ENCODE measurements at regions of chr1 and their contacts with region 1.

Region 1: DNA sequence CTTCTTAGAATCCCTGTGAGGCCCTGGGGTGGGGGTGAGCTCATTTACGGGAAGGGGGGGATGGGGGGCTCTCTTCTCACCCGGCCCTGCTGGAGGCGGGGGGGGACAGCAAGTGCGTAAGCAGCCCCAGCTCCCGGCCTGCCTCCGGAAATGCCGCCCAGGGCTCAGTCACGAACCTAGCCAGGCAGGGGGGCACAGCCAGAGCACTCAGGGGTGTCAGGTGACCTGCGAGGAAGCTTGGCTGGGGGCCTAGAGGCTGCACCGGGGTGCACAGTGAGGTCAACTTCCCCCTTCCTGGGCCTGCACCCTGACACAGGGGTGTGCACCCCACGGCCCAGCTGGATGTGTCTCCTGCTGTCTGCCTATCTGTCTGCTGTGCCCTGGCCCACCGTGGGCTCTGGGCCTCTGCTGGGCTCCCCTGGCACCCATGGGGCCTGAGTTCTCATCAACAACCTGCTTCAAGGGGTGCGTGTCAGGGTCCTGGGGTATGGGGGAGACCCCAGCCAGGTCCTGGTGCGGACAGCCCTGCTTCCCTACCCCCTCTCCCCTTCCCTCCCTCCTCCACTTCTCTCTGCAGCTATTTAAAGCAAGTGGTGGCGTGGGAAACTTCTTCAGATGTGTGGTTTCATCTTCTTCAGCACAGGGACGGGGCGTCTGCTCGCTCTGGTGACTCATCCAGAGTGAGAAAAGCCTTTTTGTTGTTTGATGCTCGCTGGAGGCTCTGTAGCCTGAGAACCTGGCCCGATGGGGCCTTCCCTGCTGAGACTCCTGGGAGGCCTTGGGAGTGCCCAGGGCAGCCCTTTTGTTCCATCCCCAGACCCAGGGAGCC is 92.5 kb upstream of the RUNX3 start:
- DNase-seq: peak; percentile 90 to 99 (median 94)
- H3K4me3 ChIP-seq: peak overlapping the region; percentile 14 to 20
- H3K4me3 Mint-ChIP-seq: peak overlapping the region; percentile 35 to 89 (median 70)
- H3K27ac ChIP-seq: peak overlapping the region; percentile 99
- H3K27ac Mint-ChIP-seq: peak overlapping the region; percentile 95 to 99 (median 97)
- H3K4me1 ChIP-seq: peaks cover 74% of the 10 kb centered on the region
- H3K4me1 Mint-ChIP-seq: peaks cover 27 to 76% (median 49%) of the 10 kb centered on the region in 4 donors
- H3K27me3 ChIP-seq: no peaks in the 10 kb centered on the region
- H3K27me3 Mint-ChIP-seq: no peaks in the 10 kb centered on the region

Region 2: DNA sequence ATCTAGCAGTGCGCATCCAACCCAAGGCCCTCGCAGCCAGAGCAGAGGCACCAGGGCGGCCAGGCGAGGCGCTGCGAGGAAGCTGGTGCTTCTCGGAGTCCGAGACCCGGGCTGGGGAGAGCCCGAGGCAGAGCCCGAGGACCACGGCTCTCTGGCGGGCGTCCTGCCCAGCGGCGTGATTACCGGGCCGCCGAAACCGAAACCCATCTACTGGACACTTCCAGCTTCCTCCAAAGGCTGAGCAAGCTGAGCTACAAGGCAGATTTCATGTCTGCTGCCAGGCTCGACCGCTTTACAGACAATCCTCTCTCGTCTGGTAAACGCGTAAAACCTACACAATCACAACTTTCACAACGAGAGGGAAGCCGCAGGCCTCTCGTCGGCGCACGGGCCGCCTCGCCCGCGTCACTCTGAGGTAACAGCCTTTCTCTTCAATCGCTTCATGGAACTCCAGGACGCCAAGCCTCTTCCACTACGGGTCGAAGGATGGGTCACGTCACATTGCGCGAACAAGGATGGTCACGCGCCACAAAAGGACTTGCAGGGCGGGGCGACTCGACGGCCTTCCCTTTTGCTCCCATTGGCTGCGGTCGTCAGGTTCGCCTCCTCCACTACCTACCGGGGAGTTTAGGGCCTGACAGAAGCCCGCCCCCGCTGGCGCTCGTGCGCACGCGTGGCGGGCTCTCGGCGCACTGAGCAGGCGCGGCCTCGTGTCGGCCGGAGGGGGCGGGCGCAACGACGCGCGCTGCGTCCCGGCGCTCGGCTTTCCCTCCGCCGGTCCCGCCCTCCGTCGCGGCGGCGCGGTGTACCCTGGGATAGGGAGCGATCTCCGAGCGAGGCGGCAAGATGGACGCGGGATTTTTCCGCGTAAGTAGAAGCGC is 379.9 kb before region 1 on chr1 and contains the start of gene SRRM1:
- CTCF ChIA-PET with region 1: no interaction called
- POLR2A ChIA-PET with region 1: no interaction called
- intact Hi-C with region 1: loop called (anchors 1 kb)
- DNase-seq: peak; percentile 98 to 100 (median 100)
- H3K4me3 ChIP-seq: peak within 1 kb of the TSS; percentile 47 to 98
- H3K4me3 Mint-ChIP-seq: peak within 1 kb of the TSS; percentile 94 to 98 (median 96)
- H3K27ac ChIP-seq: peak within 1 kb of the TSS; percentile 99
- H3K27ac Mint-ChIP-seq: peak within 1 kb of the TSS; percentile 97 to 100 (median 100)
- H3K4me1 ChIP-seq: peaks cover 32% of the 10 kb centered on the region
- H3K4me1 Mint-ChIP-seq: peaks cover 15 to 61% (median 42%) of the 10 kb centered on the region in 4 donors
- H3K27me3 ChIP-seq: no peaks in the 10 kb centered on the region
- H3K27me3 Mint-ChIP-seq: no peaks in the 10 kb centered on the region
- total RNA-seq, gene SRRM1: 209 to 230 TPM

Region 3: GRCh38 chr1:24955161-24955560 is 67.4 kb before region 1 on chr1:
- CTCF ChIA-PET with region 1: interaction called, 4 read pairs
- POLR2A ChIA-PET with region 1: interaction called, 5 read pairs
- intact Hi-C with region 1: loop called (anchors 1 kb)
- DNase-seq: peak; percentile 33 to 89 (median 52)
- H3K4me3 ChIP-seq: no peak overlapping the region
- H3K4me3 Mint-ChIP-seq: peak overlapping the region in 6 of 8 donors; percentile 47 to 79 (median 70)
- H3K27ac ChIP-seq: peak overlapping the region; percentile 15
- H3K27ac Mint-ChIP-seq: peak overlapping the region; percentile 83 to 94 (median 93)
- H3K4me1 ChIP-seq: peaks cover 58% of the 10 kb centered on the region
- H3K4me1 Mint-ChIP-seq: peaks cover 28 to 71% (median 56%) of the 10 kb centered on the region in 4 donors
- H3K27me3 ChIP-seq: no peaks in the 10 kb centered on the region
- H3K27me3 Mint-ChIP-seq: no peaks in the 10 kb centered on the region

Region 4: DNA sequence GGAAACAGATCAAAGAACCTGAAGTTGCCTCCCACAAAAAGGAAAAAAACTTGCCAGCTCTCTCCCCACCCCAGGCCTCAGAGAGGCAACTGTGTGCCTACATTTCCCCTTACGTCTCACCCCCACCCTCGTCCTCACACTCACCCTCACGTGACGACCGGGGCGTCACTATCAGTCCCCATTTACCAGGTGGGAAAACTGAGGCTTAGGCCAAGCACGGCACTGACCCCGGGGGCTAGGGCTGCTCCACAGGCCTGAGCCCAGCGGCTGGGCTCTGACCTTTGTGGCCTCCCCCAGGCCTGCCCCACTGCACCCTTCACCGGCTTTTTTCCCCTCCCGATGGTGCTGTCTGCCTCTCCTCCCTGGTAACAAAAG is 41.0 kb before region 1 on chr1:
- CTCF ChIA-PET with region 1: no interaction called
- POLR2A ChIA-PET with region 1: interaction called, 21 read pairs
- intact Hi-C with region 1: no loop called
- DNase-seq: no peak
- H3K4me3 ChIP-seq: no peak overlapping the region
- H3K4me3 Mint-ChIP-seq: peak overlapping the region in 7 of 8 donors; percentile 15 to 67 (median 52)
- H3K27ac ChIP-seq: no peak overlapping the region
- H3K27ac Mint-ChIP-seq: peak overlapping the region in 5 of 7 donors; percentile 44 to 93 (median 83)
- H3K4me1 ChIP-seq: peaks cover 72% of the 10 kb centered on the region
- H3K4me1 Mint-ChIP-seq: peaks cover 49 to 82% (median 65%) of the 10 kb centered on the region in 4 donors
- H3K27me3 ChIP-seq: no peaks in the 10 kb centered on the region
- H3K27me3 Mint-ChIP-seq: no peaks in the 10 kb centered on the region

Region 5: GRCh38 chr1:24996983-24997893 is 25.3 kb before region 1 on chr1:
- CTCF ChIA-PET with region 1: interaction called, 11 read pairs
- POLR2A ChIA-PET with region 1: interaction called, 88 read pairs
- intact Hi-C with region 1: loop called (anchors 2 kb)
- DNase-seq: no peak
- H3K4me3 ChIP-seq: no peak overlapping the region
- H3K4me3 Mint-ChIP-seq: peak overlapping the region in 4 of 8 donors; percentile 24 to 53 (median 40)
- H3K27ac ChIP-seq: no peak overlapping the region
- H3K27ac Mint-ChIP-seq: peak overlapping the region in 5 of 7 donors; percentile 36 to 90 (median 77)
- H3K4me1 ChIP-seq: peaks cover 57% of the 10 kb centered on the region
- H3K4me1 Mint-ChIP-seq: peaks cover 31 to 86% (median 52%) of the 10 kb centered on the region in 4 donors
- H3K27me3 ChIP-seq: no peaks in the 10 kb centered on the region
- H3K27me3 Mint-ChIP-seq: no peaks in the 10 kb centered on the region

Measured in CD4-positive, alpha-beta memory T cell (primary cell).